ENCODE measurements at regions of chr10 and their contacts with region 1.

Region 1: GRCh38 chr10:3776796-3777571 is 8.0 kb downstream of the KLF6 start:
- DNase-seq: peak; percentile 71 to 84 (median 82)
- H3K4me3 ChIP-seq: peak overlapping the region in 1 of 3 experiments; percentile 35
- H3K4me3 Mint-ChIP-seq: peak overlapping the region; percentile 21 to 37
- H3K27ac ChIP-seq: peak overlapping the region; percentile 59 to 85
- H3K27ac Mint-ChIP-seq: peak overlapping the region; percentile 89 to 99 (median 92)
- H3K4me1 ChIP-seq: peaks cover 65 to 69% of the 10 kb centered on the region in 2 donors
- H3K4me1 Mint-ChIP-seq: peaks cover 67% of the 10 kb centered on the region
- H3K27me3 ChIP-seq: no peaks in the 10 kb centered on the region
- H3K27me3 Mint-ChIP-seq: peaks cover 0 to 3% (median 1%) of the 10 kb centered on the region in 3 donors
- CTCF ChIP-seq: no peak

Region 2: DNA sequence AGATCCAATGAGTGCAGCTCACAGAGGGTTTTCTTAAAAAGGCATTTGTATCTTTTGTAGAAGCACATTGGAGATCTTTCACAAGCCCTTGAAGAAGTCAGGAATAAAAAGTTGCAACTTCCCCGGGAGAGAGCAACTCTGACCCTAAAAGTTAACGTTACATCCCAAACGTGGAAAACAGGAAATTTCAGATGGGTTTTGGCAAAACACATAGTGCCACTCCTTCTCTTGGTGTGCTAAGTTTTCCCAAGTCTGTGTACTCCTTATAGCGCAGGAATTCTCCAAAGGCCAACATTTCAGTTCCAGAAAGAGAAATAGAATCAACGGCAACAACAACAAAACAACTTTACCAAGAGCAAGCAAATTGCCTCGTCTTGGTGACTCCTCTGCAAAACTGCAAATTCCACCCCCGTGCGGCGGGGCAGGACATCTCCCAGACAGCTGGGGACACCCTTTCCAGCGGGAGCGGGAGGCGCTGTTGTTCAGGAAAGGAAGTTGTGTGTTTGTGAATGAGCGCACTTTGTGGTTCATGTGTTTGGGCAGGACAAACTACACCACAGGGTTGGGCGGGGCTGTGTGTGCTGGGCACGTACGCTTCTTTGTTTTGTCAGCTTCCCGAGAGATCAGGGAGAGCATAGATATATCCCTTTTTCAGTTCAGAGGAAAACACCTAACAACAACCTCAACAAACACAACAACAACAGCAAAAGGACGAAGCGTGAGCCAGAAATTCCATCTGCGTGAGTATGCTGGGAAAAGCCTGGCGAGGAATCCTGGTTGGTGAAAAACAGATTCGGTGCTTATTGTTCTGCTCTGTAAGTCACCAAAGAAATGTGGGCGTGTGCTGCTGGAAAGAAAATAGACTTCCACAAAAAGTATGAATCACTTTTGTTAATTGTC is 309.7 kb before region 1 on chr10:
- intact Hi-C with region 1: loop called in 1 of 2 experiments (anchors 5 kb)
- DNase-seq: peak; percentile 42 to 64 (median 56)
- H3K4me3 ChIP-seq: peak overlapping the region; percentile 8 to 57 (median 12)
- H3K4me3 Mint-ChIP-seq: peak overlapping the region; percentile 58 to 80
- H3K27ac ChIP-seq: peak overlapping the region; percentile 74 to 95
- H3K27ac Mint-ChIP-seq: peak overlapping the region; percentile 94 to 99 (median 97)
- H3K4me1 ChIP-seq: peaks cover 68 to 74% of the 10 kb centered on the region in 2 donors
- H3K4me1 Mint-ChIP-seq: peaks cover 68% of the 10 kb centered on the region
- H3K27me3 ChIP-seq: no peaks in the 10 kb centered on the region
- H3K27me3 Mint-ChIP-seq: peaks cover 0 to 2% (median 0%) of the 10 kb centered on the region in 3 donors
- CTCF ChIP-seq: no peak

Region 3: GRCh38 chr10:3720228-3721019 is 56.6 kb before region 1 on chr10:
- intact Hi-C with region 1: loop called in 1 of 2 experiments (anchors 5 kb)
- DNase-seq: peak; percentile 97 to 99 (median 98)
- H3K4me3 ChIP-seq: peak overlapping the region in 1 of 3 experiments; percentile 65
- H3K4me3 Mint-ChIP-seq: peak overlapping the region; percentile 65 to 88
- H3K27ac ChIP-seq: peak overlapping the region; percentile 85 to 92
- H3K27ac Mint-ChIP-seq: peak overlapping the region; percentile 97 to 99 (median 99)
- H3K4me1 ChIP-seq: peaks cover 48 to 55% of the 10 kb centered on the region in 2 donors
- H3K4me1 Mint-ChIP-seq: peaks cover 67% of the 10 kb centered on the region
- H3K27me3 ChIP-seq: no peaks in the 10 kb centered on the region
- H3K27me3 Mint-ChIP-seq: peaks cover 0 to 3% (median 0%) of the 10 kb centered on the region in 3 donors
- CTCF ChIP-seq: no peak

Region 4: DNA sequence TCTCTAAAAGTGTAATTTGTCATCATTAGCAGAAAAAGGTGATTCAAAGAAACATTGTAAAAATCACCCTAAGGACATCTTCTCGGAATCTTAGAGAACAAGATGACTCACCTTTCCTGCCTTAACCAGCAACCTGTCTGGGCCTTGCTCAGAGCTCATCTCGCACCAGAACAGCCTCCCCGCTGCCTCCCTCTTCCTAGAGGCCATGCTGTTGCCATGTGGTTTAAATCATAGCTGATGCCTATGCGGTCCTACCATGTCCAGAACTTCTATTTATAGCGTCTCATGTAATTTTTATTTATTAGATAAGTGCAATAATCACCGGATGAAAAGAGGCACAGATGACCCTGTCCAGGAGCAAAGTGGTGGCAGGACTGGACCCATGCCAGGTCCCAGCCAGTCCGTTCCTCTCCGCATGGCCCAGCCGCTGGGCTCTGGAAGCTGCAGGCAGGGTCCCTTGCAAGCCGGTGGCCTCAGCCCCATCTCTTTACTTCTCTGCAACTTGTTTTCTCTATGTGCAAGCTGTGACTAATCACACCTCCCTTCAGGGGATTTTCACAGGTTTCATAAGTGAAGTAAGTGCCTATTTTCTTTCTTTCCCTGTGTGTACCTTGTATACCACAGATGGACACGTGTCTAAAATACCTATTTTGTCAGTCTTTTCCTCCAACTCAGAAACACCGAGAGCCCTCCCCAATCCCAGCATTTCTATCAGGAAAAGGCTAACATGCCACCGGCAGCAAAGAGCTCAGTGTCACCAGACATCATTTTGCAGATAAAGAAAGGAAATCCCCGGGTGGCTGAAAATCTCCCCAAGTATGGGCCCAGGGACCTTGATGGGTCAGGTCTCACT is 19.1 kb before region 1 on chr10:
- intact Hi-C with region 1: loop called in 1 of 2 experiments (anchors 2 kb)
- DNase-seq: peak in 2 of 3 donors; percentile 35 to 73
- H3K4me3 ChIP-seq: no peak overlapping the region
- H3K4me3 Mint-ChIP-seq: no peak overlapping the region
- H3K27ac ChIP-seq: no peak overlapping the region
- H3K27ac Mint-ChIP-seq: peak overlapping the region in 4 of 7 donors; percentile 11 to 76 (median 42)
- H3K4me1 ChIP-seq: peaks cover 66 to 79% of the 10 kb centered on the region in 2 donors
- H3K4me1 Mint-ChIP-seq: peaks cover 69% of the 10 kb centered on the region
- H3K27me3 ChIP-seq: no peaks in the 10 kb centered on the region
- H3K27me3 Mint-ChIP-seq: peaks cover 1 to 5% (median 2%) of the 10 kb centered on the region in 3 donors
- CTCF ChIP-seq: no peak

Region 5: GRCh38 chr10:3924344-3924743 is 147.4 kb after region 1 on chr10:
- intact Hi-C with region 1: no loop called
- DNase-seq: peak in 1 of 3 donors; percentile 30
- H3K4me3 ChIP-seq: no peak overlapping the region
- H3K4me3 Mint-ChIP-seq: no peak overlapping the region
- H3K27ac ChIP-seq: no peak overlapping the region
- H3K27ac Mint-ChIP-seq: peak overlapping the region in 1 of 7 donors; percentile 70
- H3K4me1 ChIP-seq: no peaks in the 10 kb centered on the region
- H3K4me1 Mint-ChIP-seq: no peaks in the 10 kb centered on the region
- H3K27me3 ChIP-seq: no peaks in the 10 kb centered on the region
- H3K27me3 Mint-ChIP-seq: peaks cover 0 to 5% (median 3%) of the 10 kb centered on the region in 3 donors
- CTCF ChIP-seq: no peak

Region 6: DNA sequence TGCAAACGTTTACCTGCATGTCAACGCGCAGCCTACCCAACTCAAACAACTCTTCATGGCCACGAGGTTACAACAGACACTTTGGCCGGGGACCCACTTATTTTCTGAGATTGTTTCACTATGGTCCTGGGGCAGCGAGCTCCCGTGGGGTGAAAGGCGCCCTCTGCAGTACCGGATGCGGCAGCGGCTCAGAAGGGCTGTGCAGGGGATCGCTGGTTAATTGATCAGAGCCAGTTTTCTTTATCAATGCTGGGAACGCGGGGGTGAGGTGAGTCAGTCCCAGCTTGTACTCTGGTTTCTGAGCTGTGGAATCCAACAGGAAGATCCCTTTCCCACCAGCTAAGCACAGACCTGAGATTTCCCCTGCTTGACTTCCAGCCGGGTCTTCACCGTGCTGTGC is 374.5 kb after region 1 on chr10:
- intact Hi-C with region 1: no loop called
- DNase-seq: no peak
- H3K4me3 ChIP-seq: no peak overlapping the region
- H3K4me3 Mint-ChIP-seq: no peak overlapping the region
- H3K27ac ChIP-seq: no peak overlapping the region
- H3K27ac Mint-ChIP-seq: no peak overlapping the region
- H3K4me1 ChIP-seq: peaks cover 0 to 5% of the 10 kb centered on the region in 2 donors
- H3K4me1 Mint-ChIP-seq: peaks cover 8% of the 10 kb centered on the region
- H3K27me3 ChIP-seq: no peaks in the 10 kb centered on the region
- H3K27me3 Mint-ChIP-seq: peaks cover 0 to 3% (median 0%) of the 10 kb centered on the region in 3 donors
- CTCF ChIP-seq: no peak

Measured in CD14-positive monocyte (primary cell).